ENCODE measurements at regions of chr4 and their contacts with region 1.

Region 1: GRCh38 chr4:107930821-107931774 is at the start of gene CYP2U1:
- DNase-seq: peak; percentile 54 to 90 (median 74)
- ATAC-seq: peak; percentile 93
- H3K4me3 ChIP-seq: peak within 1 kb of the TSS; percentile 81
- H3K4me3 Mint-ChIP-seq: peak within 1 kb of the TSS; percentile 96
- H3K27ac ChIP-seq: peak within 1 kb of the TSS; percentile 2 to 4
- H3K27ac Mint-ChIP-seq: peak within 1 kb of the TSS; percentile 89
- H3K4me1 ChIP-seq: peaks cover 16% of the 10 kb centered on the region
- H3K4me1 Mint-ChIP-seq: peaks cover 50% of the 10 kb centered on the region
- H3K27me3 ChIP-seq: no peaks in the 10 kb centered on the region
- H3K27me3 Mint-ChIP-seq: no peaks in the 10 kb centered on the region
- CTCF ChIP-seq: no peak
- total RNA-seq, gene CYP2U1: 2.9 to 4.0 TPM

Region 2: DNA sequence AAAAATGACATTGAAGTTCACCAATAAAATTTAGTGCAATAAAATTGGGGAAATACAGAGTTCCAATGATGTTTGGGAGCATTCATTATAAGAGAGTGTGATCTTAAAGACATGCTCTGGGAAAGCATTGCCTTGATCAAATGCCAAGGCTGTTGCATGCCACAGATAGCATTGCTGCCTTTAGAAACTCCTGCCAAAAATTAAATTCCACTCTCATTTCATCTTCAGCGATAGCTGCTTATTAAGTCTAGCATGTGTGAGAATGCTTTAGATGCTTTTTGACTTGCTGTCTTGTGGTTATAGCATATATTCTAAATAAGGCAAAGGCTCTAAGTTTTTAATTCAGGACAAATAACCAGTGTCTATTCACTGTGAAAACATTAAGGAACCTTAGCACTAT is 1986.6 kb before region 1 on chr4:
- CTCF ChIA-PET with region 1: no interaction called
- POLR2A ChIA-PET with region 1: no interaction called
- intact Hi-C with region 1: no loop called
- DNase-seq: no peak
- ATAC-seq: no peak
- H3K4me3 ChIP-seq: no peak overlapping the region
- H3K4me3 Mint-ChIP-seq: no peak overlapping the region
- H3K27ac ChIP-seq: no peak overlapping the region
- H3K27ac Mint-ChIP-seq: no peak overlapping the region
- H3K4me1 ChIP-seq: no peaks in the 10 kb centered on the region
- H3K4me1 Mint-ChIP-seq: no peaks in the 10 kb centered on the region
- H3K27me3 ChIP-seq: no peaks in the 10 kb centered on the region
- H3K27me3 Mint-ChIP-seq: no peaks in the 10 kb centered on the region
- CTCF ChIP-seq: no peak

Region 3: DNA sequence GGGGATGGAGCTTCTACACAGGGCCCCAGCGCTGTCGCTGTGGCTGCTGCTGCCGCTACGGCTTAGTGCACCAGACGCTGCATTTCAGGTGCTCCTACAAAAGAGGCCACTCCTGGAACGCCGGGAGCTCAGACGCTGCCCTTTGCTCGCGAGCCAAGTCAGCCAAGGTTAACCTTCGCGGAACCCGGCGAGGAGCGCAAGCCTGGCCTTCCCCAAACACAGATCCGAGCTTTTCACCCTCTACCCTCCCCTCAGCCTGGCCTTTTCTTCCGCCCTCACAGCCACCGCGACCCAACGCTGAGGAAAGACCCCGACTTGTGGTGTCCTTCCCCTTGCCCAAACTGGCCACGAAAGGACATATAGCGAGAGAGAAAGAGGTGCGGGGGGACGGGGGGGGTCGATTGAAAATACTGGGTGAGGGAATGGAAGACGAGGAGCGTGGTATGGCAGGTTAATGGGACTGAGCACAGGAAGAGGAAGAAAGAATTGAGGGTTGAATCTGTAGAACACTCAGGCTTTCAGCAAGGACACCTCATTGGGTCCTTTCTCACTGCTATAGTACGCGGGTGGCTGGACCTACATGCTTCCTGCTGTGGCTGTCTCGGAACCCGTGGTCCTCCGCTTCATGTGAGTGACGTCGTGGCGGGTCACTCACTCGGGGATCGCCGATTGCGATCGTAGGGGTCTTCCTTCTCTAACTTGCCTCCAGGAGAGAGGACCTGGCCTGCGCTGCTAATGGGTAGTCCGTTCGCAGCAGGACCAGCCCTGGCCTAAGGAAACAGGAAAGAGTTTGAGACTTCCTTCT is 1614.9 kb before region 1 on chr4 and contains the starts of genes AIMP1 and TBCK:
- CTCF ChIA-PET with region 1: no interaction called
- POLR2A ChIA-PET with region 1: no interaction called
- intact Hi-C with region 1: loop called in 1 of 2 experiments (anchors 10 kb)
- DNase-seq: peak; percentile 78 to 96 (median 84)
- ATAC-seq: peak; percentile 84
- H3K4me3 ChIP-seq: peak within 1 kb of the TSS; percentile 81
- H3K4me3 Mint-ChIP-seq: no peak within 1 kb of the TSS
- H3K27ac ChIP-seq: peak within 1 kb of the TSS; percentile 95 to 96
- H3K27ac Mint-ChIP-seq: no peak within 1 kb of the TSS
- H3K4me1 ChIP-seq: peaks cover 18% of the 10 kb centered on the region
- H3K4me1 Mint-ChIP-seq: peaks cover 26% of the 10 kb centered on the region
- H3K27me3 ChIP-seq: no peaks in the 10 kb centered on the region
- H3K27me3 Mint-ChIP-seq: no peaks in the 10 kb centered on the region
- CTCF ChIP-seq: no peak
- total RNA-seq, gene AIMP1: 75.4 to 77.8 TPM
- total RNA-seq, gene TBCK: 23.5 to 29.0 TPM

Region 4: DNA sequence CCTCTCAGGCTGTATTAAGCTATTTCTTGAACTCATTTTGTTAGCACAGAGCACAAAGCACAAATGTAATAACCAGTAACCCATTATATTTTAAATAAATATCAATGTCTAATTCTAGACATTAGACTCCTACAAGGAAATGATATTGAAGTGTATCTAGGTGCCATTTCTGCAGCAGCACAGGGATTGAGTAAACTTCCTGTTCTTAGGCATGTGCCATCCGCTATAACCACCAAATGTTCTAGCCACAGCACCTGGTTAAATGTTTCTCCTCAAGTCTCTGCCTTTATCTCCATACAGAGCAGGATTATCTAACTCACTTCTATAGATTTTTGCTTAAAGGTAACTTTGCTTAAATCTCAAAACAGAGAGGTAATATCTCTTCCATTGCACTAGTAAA is 55.0 kb before region 1 on chr4:
- CTCF ChIA-PET with region 1: no interaction called
- POLR2A ChIA-PET with region 1: no interaction called
- intact Hi-C with region 1: no loop called
- DNase-seq: no peak
- ATAC-seq: no peak
- H3K4me3 ChIP-seq: no peak overlapping the region
- H3K4me3 Mint-ChIP-seq: no peak overlapping the region
- H3K27ac ChIP-seq: no peak overlapping the region
- H3K27ac Mint-ChIP-seq: no peak overlapping the region
- H3K4me1 ChIP-seq: no peaks in the 10 kb centered on the region
- H3K4me1 Mint-ChIP-seq: no peaks in the 10 kb centered on the region
- H3K27me3 ChIP-seq: peaks cover 0 to 10% of the 10 kb centered on the region in 2 experiments
- H3K27me3 Mint-ChIP-seq: peaks cover 4% of the 10 kb centered on the region
- CTCF ChIP-seq: no peak

Region 5: GRCh38 chr4:107989537-107990386 is 58.7 kb after region 1 on chr4 and contains the start of gene HADH:
- CTCF ChIA-PET with region 1: no interaction called
- POLR2A ChIA-PET with region 1: interaction called, 15 read pairs
- intact Hi-C with region 1: loop called (anchors 2 to 5 kb)
- DNase-seq: peak; percentile 85 to 98 (median 94)
- ATAC-seq: peak; percentile 97
- H3K4me3 ChIP-seq: peak within 1 kb of the TSS; percentile 81
- H3K4me3 Mint-ChIP-seq: peak within 1 kb of the TSS; percentile 92
- H3K27ac ChIP-seq: peak within 1 kb of the TSS; percentile 37 to 81
- H3K27ac Mint-ChIP-seq: peak within 1 kb of the TSS; percentile 88
- H3K4me1 ChIP-seq: peaks cover 14% of the 10 kb centered on the region
- H3K4me1 Mint-ChIP-seq: peaks cover 83% of the 10 kb centered on the region
- H3K27me3 ChIP-seq: no peaks in the 10 kb centered on the region
- H3K27me3 Mint-ChIP-seq: no peaks in the 10 kb centered on the region
- CTCF ChIP-seq: no peak
- total RNA-seq, gene HADH: 16.1 to 16.3 TPM

Measured in CD4-positive, alpha-beta T cell (primary cell).